ENCODE measurements at regions of chr2 and their contacts with region 1.

Region 1: DNA sequence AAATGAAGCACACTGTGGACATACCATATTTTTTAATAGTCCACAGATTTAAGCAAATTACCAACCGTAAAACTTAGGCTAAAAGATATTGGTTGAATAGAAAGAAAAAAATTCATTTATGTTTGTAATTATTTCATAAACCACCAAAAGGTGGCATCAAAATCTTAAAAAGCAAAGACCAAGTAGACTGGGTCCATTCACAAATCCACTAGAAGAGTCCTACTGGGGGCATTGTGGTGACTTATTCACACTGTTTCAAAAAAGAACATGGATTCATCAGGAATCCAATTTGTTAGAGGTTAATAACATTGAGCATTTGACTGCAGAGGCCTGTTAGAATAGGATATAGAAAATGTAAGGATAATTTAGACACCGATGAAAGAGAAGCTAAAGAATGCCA is 194.9 kb upstream of the KYNU start:
- DNase-seq: no peak
- H3K4me3 ChIP-seq: no peak overlapping the region
- H3K27ac ChIP-seq: no peak overlapping the region
- H3K4me1 ChIP-seq: no peaks in the 10 kb centered on the region
- H3K27me3 ChIP-seq: no peaks in the 10 kb centered on the region
- CTCF ChIP-seq: no peak
- EP300 ChIP-seq: no peak
- POLR2A ChIP-seq: no peak

Region 2: GRCh38 chr2:142495141-142495540 is 187.4 kb before region 1 on chr2:
- intact Hi-C with region 1: no loop called
- DNase-seq: no peak
- H3K4me3 ChIP-seq: no peak overlapping the region
- H3K27ac ChIP-seq: no peak overlapping the region
- H3K4me1 ChIP-seq: no peaks in the 10 kb centered on the region
- H3K27me3 ChIP-seq: no peaks in the 10 kb centered on the region
- CTCF ChIP-seq: no peak
- EP300 ChIP-seq: no peak
- POLR2A ChIP-seq: no peak

Region 3: GRCh38 chr2:142989273-142990204 is 307.0 kb after region 1 on chr2:
- intact Hi-C with region 1: loop called (anchors 10 kb)
- DNase-seq: no peak
- H3K4me3 ChIP-seq: no peak overlapping the region
- H3K27ac ChIP-seq: no peak overlapping the region
- H3K4me1 ChIP-seq: peaks cover 0 to 3% (median 0%) of the 10 kb centered on the region in 4 donors
- H3K27me3 ChIP-seq: no peaks in the 10 kb centered on the region
- CTCF ChIP-seq: peak; percentile 23 to 52 (median 42)
- EP300 ChIP-seq: no peak
- POLR2A ChIP-seq: no peak